ENCODE measurements at regions of chr14 and their contacts with region 1.

Region 1: DNA sequence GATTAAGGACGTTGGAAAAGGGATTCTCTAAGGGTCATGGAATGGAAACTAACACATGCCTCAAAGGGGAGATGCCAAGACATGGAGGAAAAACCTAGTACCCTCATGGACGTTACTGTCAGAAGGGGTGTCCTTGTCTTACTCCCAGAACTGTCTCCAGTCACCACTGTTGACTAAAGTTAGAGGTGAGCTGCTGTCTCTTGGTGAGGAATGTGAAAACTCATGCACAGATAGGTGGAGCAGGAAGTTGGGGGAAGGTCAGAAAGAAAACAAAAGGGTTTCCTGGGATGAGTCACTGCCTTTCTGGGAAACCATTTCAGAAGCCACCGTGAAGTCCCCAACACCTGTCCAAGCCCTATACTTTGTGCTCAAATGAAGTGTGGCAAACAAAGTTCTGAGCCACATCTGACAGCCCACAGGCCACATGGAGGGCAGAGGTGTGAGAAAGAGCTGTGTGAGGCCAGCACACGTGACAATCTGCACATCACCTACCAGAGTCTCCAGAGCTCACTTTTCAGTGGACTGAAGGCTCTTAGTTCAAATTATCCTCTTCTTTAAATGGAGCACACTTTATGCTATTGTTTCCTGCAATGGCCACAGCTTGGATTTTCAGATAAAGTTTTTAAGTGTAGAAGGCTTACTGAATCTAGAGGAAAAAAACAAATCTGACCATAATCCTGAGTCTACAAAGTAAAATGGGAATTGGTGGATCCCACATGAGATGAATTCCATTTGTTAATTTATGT is 92.9 kb upstream of the EGLN3 start:
- DNase-seq: peak; percentile 93
- H3K4me3 Mint-ChIP-seq: peak overlapping the region; percentile 12
- H3K27ac Mint-ChIP-seq: peak overlapping the region; percentile 85
- H3K4me1 Mint-ChIP-seq: peaks cover 73% of the 10 kb centered on the region
- H3K27me3 Mint-ChIP-seq: peaks cover 8% of the 10 kb centered on the region

Region 2: GRCh38 chr14:33938131-33938949 is 105.5 kb before region 1 on chr14:
- CTCF ChIA-PET with region 1: no interaction called
- POLR2A ChIA-PET with region 1: no interaction called
- DNase-seq: no peak
- H3K4me3 Mint-ChIP-seq: no peak overlapping the region
- H3K27ac Mint-ChIP-seq: no peak overlapping the region
- H3K4me1 Mint-ChIP-seq: peaks cover 8% of the 10 kb centered on the region
- H3K27me3 Mint-ChIP-seq: peaks cover 16% of the 10 kb centered on the region

Region 3: DNA sequence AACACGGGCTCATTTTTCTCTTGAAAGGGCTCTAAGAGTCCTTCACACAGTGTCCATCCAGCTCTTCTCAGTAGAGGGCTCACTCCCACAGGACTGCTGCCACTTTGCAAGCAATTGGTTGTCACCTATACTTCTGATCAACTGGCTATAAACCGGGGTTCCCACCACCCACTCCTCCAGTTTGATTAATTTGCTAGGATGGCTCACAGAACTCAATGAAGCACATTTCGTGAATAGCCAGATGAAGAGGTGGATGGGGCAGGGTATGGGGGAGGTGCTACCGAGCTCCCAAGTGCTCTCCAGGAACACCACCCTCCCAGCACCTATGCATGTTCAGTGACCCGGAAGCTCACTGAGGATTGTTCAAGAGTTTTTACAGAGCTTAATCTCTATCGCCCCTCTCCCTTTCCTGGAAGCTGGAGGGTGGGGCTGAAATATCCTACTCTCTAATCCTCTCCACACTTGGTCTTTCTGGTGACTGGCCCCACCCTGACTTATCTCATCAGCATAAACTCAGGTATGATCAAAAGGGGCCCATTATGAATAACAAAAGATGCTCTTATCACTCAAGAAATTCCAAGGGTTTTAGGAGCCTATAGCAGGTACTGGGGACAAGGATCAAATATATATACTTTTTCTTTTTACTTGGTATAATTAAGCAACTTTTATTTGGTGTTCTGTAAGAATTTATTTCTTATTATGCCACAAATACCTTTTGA is 79.0 kb before region 1 on chr14:
- CTCF ChIA-PET with region 1: no interaction called
- POLR2A ChIA-PET with region 1: no interaction called
- DNase-seq: no peak
- H3K4me3 Mint-ChIP-seq: no peak overlapping the region
- H3K27ac Mint-ChIP-seq: no peak overlapping the region
- H3K4me1 Mint-ChIP-seq: peaks cover 11% of the 10 kb centered on the region
- H3K27me3 Mint-ChIP-seq: peaks cover 35% of the 10 kb centered on the region

Region 4: DNA sequence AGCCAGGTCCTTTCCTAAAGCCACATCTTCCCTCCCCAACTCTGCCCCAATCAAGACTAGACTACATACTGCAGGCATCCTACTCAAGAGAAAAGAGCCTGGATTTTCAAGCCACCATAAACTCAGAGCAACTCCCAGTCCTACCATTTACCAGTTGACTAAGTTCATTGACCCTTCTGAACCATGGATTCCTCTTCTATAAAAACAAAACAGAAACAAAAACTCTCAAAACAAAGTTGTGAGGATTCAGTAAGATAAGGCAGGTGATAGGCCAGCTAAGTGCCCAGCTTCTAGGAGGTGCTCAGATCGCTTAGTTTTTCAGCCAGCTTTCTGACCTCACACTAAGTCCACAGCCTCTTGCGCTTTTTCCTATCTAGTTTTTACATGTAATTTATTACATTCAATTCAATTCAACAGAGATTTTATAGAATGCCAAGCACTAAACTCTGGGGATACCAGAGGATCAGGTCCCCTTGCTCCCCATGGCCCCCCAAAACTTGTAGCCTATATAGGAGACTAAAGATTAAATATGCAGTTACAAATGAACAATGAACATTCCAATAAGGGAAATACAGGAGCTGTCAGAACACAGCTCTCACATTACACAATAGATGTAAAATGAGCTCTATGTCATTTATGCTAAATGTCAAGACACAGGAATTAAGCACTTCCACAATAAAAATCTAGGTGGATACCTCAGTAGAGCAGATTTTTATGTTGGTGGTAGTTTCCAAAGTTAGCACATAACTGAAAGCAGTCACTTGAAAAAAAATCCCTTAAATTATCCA is 11.6 kb after region 1 on chr14:
- CTCF ChIA-PET with region 1: interaction called, 14 read pairs
- POLR2A ChIA-PET with region 1: interaction called, 3 read pairs
- DNase-seq: no peak
- H3K4me3 Mint-ChIP-seq: no peak overlapping the region
- H3K27ac Mint-ChIP-seq: peak overlapping the region; percentile 27
- H3K4me1 Mint-ChIP-seq: peaks cover 74% of the 10 kb centered on the region
- H3K27me3 Mint-ChIP-seq: peaks cover 19% of the 10 kb centered on the region

Region 5: DNA sequence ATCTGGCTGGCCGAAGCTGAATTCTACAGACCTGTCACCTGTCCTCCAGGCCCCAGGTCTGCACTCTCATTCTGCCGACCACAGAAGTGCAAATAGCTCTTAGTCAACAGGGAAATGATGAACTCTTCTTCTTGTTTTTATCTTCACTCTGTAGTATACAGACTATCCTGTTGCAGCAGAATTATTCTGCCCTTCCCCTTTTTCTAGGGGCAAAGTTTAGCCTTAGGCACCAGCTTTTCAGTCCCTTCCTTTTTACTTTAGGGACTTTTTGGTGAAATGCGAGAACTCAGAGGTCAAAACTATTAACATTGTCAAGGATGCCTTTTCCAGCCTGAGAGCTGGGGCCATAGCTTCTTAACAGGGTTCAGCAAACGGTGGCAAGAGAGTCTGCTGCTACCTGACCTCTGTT is 136.7 kb after region 1 on chr14:
- CTCF ChIA-PET with region 1: no interaction called
- POLR2A ChIA-PET with region 1: no interaction called
- DNase-seq: no peak
- H3K4me3 Mint-ChIP-seq: no peak overlapping the region
- H3K27ac Mint-ChIP-seq: no peak overlapping the region
- H3K4me1 Mint-ChIP-seq: no peaks in the 10 kb centered on the region
- H3K27me3 Mint-ChIP-seq: peaks cover 5% of the 10 kb centered on the region

Measured in activated CD4-positive, alpha-beta T cell treated with anti-CD3 and anti-CD28 coated beads, Interleukin-2, amount 10 ng/mL, durations not matched to agents 7 days and 5 days (primary cell).